ENCODE measurements at regions of chr6 and their contacts with region 1.

Region 1: DNA sequence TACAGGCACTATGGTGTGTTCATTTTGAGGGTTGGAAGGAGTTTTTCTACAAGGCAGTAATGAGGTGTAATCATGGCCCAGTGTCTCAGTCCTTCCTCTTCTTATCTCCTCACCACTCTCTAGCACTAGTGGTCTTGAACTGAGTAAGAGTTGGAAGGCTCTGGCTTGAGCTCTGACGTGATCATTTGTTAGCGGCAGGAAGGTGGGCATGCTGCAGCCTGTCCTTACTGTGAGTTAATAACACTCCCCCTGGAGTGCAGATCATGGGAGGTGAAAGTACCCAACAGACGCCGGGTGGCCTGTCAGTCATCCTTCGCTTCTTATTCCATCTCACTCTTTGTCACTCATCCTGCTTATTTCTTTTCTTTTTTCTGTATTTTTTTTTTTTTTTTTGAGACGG is 356.9 kb downstream of the CDKAL1 start:
- DNase-seq: no peak
- ATAC-seq: no peak
- H3K4me3 ChIP-seq: no peak overlapping the region
- H3K27ac ChIP-seq: no peak overlapping the region
- H3K4me1 ChIP-seq: no peaks in the 10 kb centered on the region
- H3K27me3 ChIP-seq: no peaks in the 10 kb centered on the region
- CTCF ChIP-seq: no peak
- POLR2A ChIP-seq: no peak
- RAD21 ChIP-seq: no peak

Region 2: DNA sequence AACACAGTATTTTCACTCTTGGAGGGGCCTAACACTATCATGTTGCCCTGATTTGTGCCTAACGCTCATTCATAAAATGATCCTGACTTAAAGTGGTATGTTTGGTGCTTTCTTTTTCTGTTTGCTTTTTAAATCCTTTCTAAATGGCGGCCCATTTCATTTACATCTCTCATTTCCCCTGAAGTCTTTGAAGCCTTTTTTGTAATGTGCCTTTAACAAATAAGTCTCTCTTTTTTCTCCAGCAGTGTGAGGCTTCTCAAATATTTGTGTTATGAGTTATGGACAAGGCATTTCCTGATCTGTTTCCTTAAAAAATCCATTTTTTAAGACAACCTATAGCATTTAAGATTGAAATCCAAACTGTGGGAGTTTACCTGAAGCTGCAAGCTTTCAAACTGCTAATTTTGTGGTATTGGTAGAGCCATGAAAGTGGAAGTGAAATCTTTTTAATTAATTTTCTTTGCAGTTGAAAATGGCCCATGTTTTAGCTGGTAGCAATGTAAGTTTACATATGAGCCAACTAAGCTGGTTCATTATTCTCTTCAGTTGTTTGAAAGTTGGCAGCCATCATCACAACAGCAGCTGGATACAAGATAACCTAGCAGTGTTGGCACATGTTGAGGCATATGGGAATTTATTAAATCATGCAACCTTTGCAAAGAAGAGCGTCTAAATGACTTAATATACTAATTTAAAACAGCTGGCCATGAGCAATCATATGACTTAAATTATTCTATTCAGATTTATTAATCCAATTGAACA is 112.8 kb after region 1 on chr6:
- CTCF ChIA-PET with region 1: no interaction called
- POLR2A ChIA-PET with region 1: no interaction called
- RAD21 ChIA-PET with region 1: no interaction called
- intact Hi-C with region 1: loop called (anchors 5 kb)
- DNase-seq: no peak
- ATAC-seq: peak; percentile 8; the same call in 1 of the 2 replicates
- H3K4me3 ChIP-seq: no peak overlapping the region
- H3K27ac ChIP-seq: peak overlapping the region; percentile 87
- H3K4me1 ChIP-seq: peaks cover 72 to 76% of the 10 kb centered on the region in 2 experiments
- H3K27me3 ChIP-seq: no peaks in the 10 kb centered on the region
- CTCF ChIP-seq: no peak
- POLR2A ChIP-seq: no peak
- RAD21 ChIP-seq: no peak

Measured in HCT116 (cell line).